ENCODE measurements at regions of chr12 and their contacts with region 1.

Region 1: GRCh38 chr12:94074980-94075928 is 73.1 kb upstream of the PLXNC1 start:
- DNase-seq: peak; percentile 71
- H3K4me3 ChIP-seq: no peak overlapping the region
- H3K27ac ChIP-seq: no peak overlapping the region
- H3K27me3 ChIP-seq: peaks cover 3% of the 10 kb centered on the region
- CTCF ChIP-seq: peak; percentile 80

Region 2: GRCh38 chr12:93502802-93503623 is 572.2 kb before region 1 on chr12:
- CTCF ChIA-PET with region 1: interaction called, 23 read pairs
- POLR2A ChIA-PET with region 1: no interaction called
- DNase-seq: no peak
- H3K4me3 ChIP-seq: no peak overlapping the region
- H3K27ac ChIP-seq: no peak overlapping the region
- H3K27me3 ChIP-seq: no peaks in the 10 kb centered on the region
- CTCF ChIP-seq: peak; percentile 85

Region 3: GRCh38 chr12:93766796-93767523 is 308.3 kb before region 1 on chr12:
- CTCF ChIA-PET with region 1: interaction called, 54 read pairs
- POLR2A ChIA-PET with region 1: interaction called, 7 read pairs
- DNase-seq: no peak
- H3K4me3 ChIP-seq: no peak overlapping the region
- H3K27ac ChIP-seq: no peak overlapping the region
- H3K27me3 ChIP-seq: no peaks in the 10 kb centered on the region
- CTCF ChIP-seq: peak; percentile 72

Region 4: DNA sequence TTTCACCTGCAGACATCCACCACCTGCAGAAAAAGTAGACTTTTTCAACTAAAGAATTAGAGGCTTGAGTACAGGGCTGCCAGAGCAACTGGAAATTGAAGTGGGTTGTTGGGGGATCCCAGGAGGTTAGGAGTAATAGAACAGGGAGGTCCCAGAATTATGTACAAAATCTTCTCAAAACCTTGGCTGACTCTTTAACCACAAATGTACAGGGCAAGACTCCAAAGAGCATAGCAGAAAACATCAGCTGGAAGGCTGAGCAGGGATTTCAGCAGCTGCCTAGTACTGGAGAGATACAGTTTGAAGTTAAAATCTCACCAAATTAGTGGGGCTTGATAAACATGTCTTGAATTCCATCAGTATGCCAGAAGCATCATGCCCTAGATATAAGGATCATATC is 206.5 kb before region 1 on chr12:
- CTCF ChIA-PET with region 1: interaction called, 10 read pairs
- POLR2A ChIA-PET with region 1: no interaction called
- DNase-seq: no peak
- H3K4me3 ChIP-seq: no peak overlapping the region
- H3K27ac ChIP-seq: no peak overlapping the region
- H3K27me3 ChIP-seq: no peaks in the 10 kb centered on the region
- CTCF ChIP-seq: no peak

Region 5: GRCh38 chr12:94057262-94058151 is 17.7 kb before region 1 on chr12:
- CTCF ChIA-PET with region 1: interaction called, 30 read pairs
- POLR2A ChIA-PET with region 1: no interaction called
- DNase-seq: no peak
- H3K4me3 ChIP-seq: no peak overlapping the region
- H3K27ac ChIP-seq: no peak overlapping the region
- H3K27me3 ChIP-seq: no peaks in the 10 kb centered on the region
- CTCF ChIP-seq: no peak

Region 6: DNA sequence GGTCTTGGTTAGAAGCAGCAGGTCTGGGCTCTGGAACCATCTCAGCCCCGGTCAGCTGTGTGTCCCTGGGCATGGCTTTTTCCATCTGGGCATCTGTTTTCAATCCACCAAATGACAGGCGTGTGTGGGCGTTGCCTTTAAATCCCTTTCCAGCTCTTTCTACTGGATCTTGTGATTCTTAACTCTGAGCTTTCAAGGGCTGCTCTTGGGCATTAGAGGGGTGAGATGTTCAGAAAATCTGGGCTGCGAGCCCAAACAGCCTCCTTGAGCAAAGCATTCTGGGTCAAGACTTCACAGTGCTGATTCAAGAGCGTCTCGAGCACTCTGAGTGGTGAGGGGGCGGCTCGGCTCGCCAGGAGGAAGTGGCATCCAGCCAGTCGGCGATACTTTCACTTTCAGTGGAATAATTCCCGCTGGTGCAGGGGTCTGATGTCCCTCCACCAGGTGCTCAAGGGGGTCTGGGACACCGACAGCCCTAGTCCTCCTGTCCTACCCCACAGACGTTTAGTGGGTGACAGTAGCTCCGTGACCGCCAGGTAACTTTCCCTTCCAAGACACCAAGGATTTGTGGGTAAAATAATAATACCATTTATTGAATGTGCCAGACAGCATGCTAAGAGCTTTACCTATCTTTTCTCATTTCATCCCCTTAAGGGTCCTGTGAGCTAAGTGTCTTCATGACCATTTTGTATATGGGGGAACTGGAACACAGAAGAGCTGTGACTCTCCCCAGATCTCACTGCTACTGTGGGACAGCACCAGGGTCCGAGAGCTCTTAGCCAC is 187.2 kb after region 1 on chr12:
- CTCF ChIA-PET with region 1: no interaction called
- POLR2A ChIA-PET with region 1: no interaction called
- DNase-seq: peak; percentile 92
- H3K4me3 ChIP-seq: peak overlapping the region; percentile 66
- H3K27ac ChIP-seq: peak overlapping the region; percentile 89
- H3K27me3 ChIP-seq: no peaks in the 10 kb centered on the region
- CTCF ChIP-seq: no peak

Region 7: DNA sequence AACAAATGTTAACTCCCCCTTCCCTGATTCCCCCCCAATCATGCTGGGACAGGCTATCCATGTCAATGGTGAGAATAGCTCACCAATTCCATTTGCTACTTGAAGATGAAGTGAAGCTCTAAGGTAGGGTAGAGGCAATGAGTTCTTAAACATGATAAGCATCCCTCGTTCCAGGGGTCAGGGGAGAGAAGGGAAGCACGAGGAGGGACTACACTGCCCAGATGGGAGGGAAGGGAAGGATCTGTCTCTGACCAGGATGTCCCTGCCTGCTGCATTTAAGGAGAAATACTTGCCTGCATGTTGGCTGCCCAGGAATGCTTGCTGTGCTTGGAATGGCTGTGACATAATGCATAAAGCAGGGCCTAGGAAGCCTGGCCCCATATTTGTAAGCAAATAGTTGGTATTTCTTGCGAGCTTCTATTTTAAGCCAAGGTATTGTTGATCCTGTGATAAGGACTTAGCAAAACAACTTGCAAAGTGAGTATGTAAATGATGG is 229.4 kb after region 1 on chr12:
- CTCF ChIA-PET with region 1: interaction called, 15 read pairs
- POLR2A ChIA-PET with region 1: no interaction called
- DNase-seq: peak; percentile 30
- H3K4me3 ChIP-seq: no peak overlapping the region
- H3K27ac ChIP-seq: peak overlapping the region; percentile 32
- H3K27me3 ChIP-seq: no peaks in the 10 kb centered on the region
- CTCF ChIP-seq: no peak

Region 8: DNA sequence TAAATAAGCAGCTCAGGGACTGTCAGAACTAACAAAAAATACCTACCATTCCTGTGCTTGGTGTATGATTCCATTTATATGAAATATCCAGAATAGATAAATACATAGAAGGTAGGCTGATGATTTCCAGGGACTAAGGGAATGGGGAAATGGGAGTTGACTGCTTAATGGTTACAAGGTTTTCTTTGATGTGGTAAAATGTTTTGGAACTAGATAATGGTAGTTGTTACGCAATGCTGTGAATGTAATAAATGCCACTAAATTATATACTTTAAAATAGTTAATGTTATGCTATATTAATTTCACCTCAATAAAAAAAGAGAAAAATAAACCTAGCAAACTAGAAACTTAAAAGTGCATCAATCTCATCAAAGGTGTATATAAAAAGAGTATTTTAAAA is 343.3 kb after region 1 on chr12:
- CTCF ChIA-PET with region 1: no interaction called
- POLR2A ChIA-PET with region 1: no interaction called
- DNase-seq: no peak
- H3K4me3 ChIP-seq: no peak overlapping the region
- H3K27ac ChIP-seq: no peak overlapping the region
- H3K27me3 ChIP-seq: no peaks in the 10 kb centered on the region
- CTCF ChIP-seq: no peak

Measured in AG04450 (cell line).